Aorta (tissue), 5 donors: ENCODE measurements at regions of chr14 and their contacts with region 1.

Region 1: GRCh38 chr14:57879516-57879915 is 13.6 kb upstream of the SLC35F4 start:
- DNase-seq: no peak
- ATAC-seq: no peak
- H3K4me3 ChIP-seq: no peak overlapping the region
- H3K27ac ChIP-seq: no peak overlapping the region
- H3K4me1 ChIP-seq: peaks cover 0 to 1% of the 10 kb centered on the region in 2 donors
- H3K27me3 ChIP-seq: no peaks in the 10 kb centered on the region

Region 2: DNA sequence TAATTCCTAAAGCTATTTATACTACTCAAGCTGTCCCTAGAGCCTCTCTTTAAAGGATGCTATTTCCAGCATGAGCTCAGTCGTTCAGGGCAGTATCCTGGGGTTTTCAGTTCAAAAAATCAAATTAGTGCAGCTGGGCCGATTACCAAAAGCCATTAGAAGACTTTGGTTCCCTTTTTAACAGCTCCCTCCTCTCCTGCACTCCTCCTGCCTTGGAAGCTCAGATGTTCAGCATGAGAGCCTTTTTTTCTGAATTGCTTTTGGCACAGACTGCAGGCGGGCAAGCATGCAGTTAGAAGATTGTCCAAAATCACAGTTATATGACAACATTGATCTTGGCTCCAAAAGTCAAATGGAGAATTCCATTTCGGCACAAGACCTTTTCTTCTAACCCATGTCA is 193.2 kb before region 1 on chr14:
- intact Hi-C with region 1: loop called in 1 of 2 experiments (anchors 5 kb)
- DNase-seq: no peak
- ATAC-seq: peak; percentile 63
- H3K4me3 ChIP-seq: no peak overlapping the region
- H3K27ac ChIP-seq: no peak overlapping the region
- H3K4me1 ChIP-seq: peaks cover 0 to 3% of the 10 kb centered on the region in 2 donors
- H3K27me3 ChIP-seq: no peaks in the 10 kb centered on the region

Region 3: GRCh38 chr14:57785058-57785457 is 94.5 kb before region 1 on chr14:
- intact Hi-C with region 1: no loop called
- DNase-seq: no peak
- ATAC-seq: no peak
- H3K4me3 ChIP-seq: no peak overlapping the region
- H3K27ac ChIP-seq: no peak overlapping the region
- H3K4me1 ChIP-seq: no peaks in the 10 kb centered on the region
- H3K27me3 ChIP-seq: no peaks in the 10 kb centered on the region

Region 4: GRCh38 chr14:57918791-57919190 is 39.3 kb after region 1 on chr14:
- intact Hi-C with region 1: no loop called
- DNase-seq: no peak
- ATAC-seq: no peak
- H3K4me3 ChIP-seq: no peak overlapping the region
- H3K27ac ChIP-seq: no peak overlapping the region
- H3K4me1 ChIP-seq: no peaks in the 10 kb centered on the region
- H3K27me3 ChIP-seq: no peaks in the 10 kb centered on the region

Region 5: DNA sequence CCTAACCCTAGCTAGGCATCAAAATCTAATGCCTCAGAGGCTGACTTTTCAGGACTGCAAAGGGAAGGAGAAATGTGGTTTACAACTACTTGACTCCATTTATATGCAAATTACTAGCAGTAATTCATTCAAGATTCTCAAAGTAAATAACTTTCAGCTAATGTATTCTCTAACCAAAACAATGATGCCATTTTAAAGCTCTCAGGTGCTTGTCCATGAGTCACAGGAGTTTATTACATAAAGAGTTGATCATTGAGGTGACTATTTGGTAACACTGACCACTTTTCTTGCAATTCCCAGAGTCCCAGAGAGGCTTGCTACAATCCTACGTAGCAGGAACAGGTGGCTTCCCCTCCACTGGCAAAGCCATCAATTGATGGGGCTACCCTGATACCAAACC is 95.4 kb after region 1 on chr14:
- intact Hi-C with region 1: loop called in 1 of 2 experiments (anchors 5 kb)
- DNase-seq: no peak
- ATAC-seq: no peak
- H3K4me3 ChIP-seq: no peak overlapping the region
- H3K27ac ChIP-seq: no peak overlapping the region
- H3K4me1 ChIP-seq: peaks cover 2 to 4% of the 10 kb centered on the region in 2 donors
- H3K27me3 ChIP-seq: no peaks in the 10 kb centered on the region

Region 6: GRCh38 chr14:58066115-58066514 is 186.6 kb after region 1 on chr14:
- intact Hi-C with region 1: loop called (anchors 5 kb)
- DNase-seq: no peak
- ATAC-seq: no peak
- H3K4me3 ChIP-seq: no peak overlapping the region
- H3K27ac ChIP-seq: no peak overlapping the region
- H3K4me1 ChIP-seq: no peaks in the 10 kb centered on the region
- H3K27me3 ChIP-seq: no peaks in the 10 kb centered on the region

Region 7: GRCh38 chr14:58227096-58227819 is 347.7 kb after region 1 on chr14:
- intact Hi-C with region 1: no loop called
- DNase-seq: no peak
- ATAC-seq: no peak
- H3K4me3 ChIP-seq: no peak overlapping the region
- H3K27ac ChIP-seq: no peak overlapping the region
- H3K4me1 ChIP-seq: no peaks in the 10 kb centered on the region
- H3K27me3 ChIP-seq: no peaks in the 10 kb centered on the region